CD8-positive, alpha-beta T cell (primary cell): ENCODE measurements at regions of chr6 and their contacts with region 1.

Region 1: DNA sequence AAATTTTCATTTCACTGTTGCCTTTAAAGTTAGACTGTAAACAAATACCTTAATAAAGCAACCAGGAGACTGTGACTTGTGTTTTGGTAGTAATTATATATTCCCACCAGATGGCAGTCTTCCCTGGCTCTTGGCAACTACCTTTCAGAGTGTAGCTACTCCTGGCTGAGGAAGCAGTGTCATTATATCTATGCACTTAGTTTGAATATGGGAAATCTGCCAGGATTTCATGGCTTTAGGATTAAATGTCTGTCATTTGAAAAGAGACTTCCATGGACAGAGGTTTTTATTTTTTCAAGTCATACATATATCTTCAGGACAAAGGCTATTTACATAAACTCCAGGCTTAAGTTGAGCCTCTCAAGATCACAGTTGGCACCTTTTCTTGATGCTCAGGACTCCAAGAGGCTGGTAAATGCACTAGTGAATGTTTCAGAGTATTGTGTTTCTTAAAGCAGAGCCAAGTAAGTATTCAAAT is 160.1 kb downstream of the C6orf58 start:
- DNase-seq: peak in 7 of 9 experiments; percentile 4 to 84 (median 41)
- ATAC-seq: peak; percentile 96
- H3K4me3 ChIP-seq: no peak overlapping the region
- H3K4me3 Mint-ChIP-seq: no peak overlapping the region
- H3K27ac ChIP-seq: peak overlapping the region in 1 of 2 experiments; percentile 21
- H3K27ac Mint-ChIP-seq: peak overlapping the region; percentile 69
- H3K4me1 ChIP-seq: peaks cover 31% of the 10 kb centered on the region
- H3K4me1 Mint-ChIP-seq: peaks cover 67% of the 10 kb centered on the region
- H3K27me3 ChIP-seq: no peaks in the 10 kb centered on the region
- H3K27me3 Mint-ChIP-seq: no peaks in the 10 kb centered on the region
- CTCF ChIP-seq: peak; percentile 84

Region 2: GRCh38 chr6:127841811-127842210 is 104.8 kb after region 1 on chr6:
- CTCF ChIA-PET with region 1: no interaction called
- POLR2A ChIA-PET with region 1: interaction called, 3 read pairs
- intact Hi-C with region 1: loop called in 1 of 2 experiments (anchors 5 kb)
- DNase-seq: no peak
- ATAC-seq: no peak
- H3K4me3 ChIP-seq: no peak overlapping the region
- H3K4me3 Mint-ChIP-seq: no peak overlapping the region
- H3K27ac ChIP-seq: no peak overlapping the region
- H3K27ac Mint-ChIP-seq: peak overlapping the region; percentile 37
- H3K4me1 ChIP-seq: peaks cover 19% of the 10 kb centered on the region
- H3K4me1 Mint-ChIP-seq: peaks cover 73% of the 10 kb centered on the region
- H3K27me3 ChIP-seq: no peaks in the 10 kb centered on the region
- H3K27me3 Mint-ChIP-seq: no peaks in the 10 kb centered on the region
- CTCF ChIP-seq: no peak

Region 3: GRCh38 chr6:128327890-128328289 is 590.8 kb after region 1 on chr6:
- CTCF ChIA-PET with region 1: interaction called, 9 read pairs
- POLR2A ChIA-PET with region 1: no interaction called
- intact Hi-C with region 1: loop called (anchors 1 kb)
- DNase-seq: peak in 4 of 9 experiments; percentile 7 to 63 (median 35)
- ATAC-seq: peak; percentile 44
- H3K4me3 ChIP-seq: no peak overlapping the region
- H3K4me3 Mint-ChIP-seq: no peak overlapping the region
- H3K27ac ChIP-seq: no peak overlapping the region
- H3K27ac Mint-ChIP-seq: no peak overlapping the region
- H3K4me1 ChIP-seq: no peaks in the 10 kb centered on the region
- H3K4me1 Mint-ChIP-seq: no peaks in the 10 kb centered on the region
- H3K27me3 ChIP-seq: no peaks in the 10 kb centered on the region
- H3K27me3 Mint-ChIP-seq: no peaks in the 10 kb centered on the region
- CTCF ChIP-seq: no peak

Region 4: GRCh38 chr6:128731249-128732165 is 994.5 kb after region 1 on chr6:
- CTCF ChIA-PET with region 1: interaction called, 3 read pairs
- POLR2A ChIA-PET with region 1: no interaction called
- intact Hi-C with region 1: loop called (anchors 1 to 5 kb)
- DNase-seq: peak in 2 of 9 experiments; percentile 33 to 49
- ATAC-seq: no peak
- H3K4me3 ChIP-seq: no peak overlapping the region
- H3K4me3 Mint-ChIP-seq: no peak overlapping the region
- H3K27ac ChIP-seq: no peak overlapping the region
- H3K27ac Mint-ChIP-seq: no peak overlapping the region
- H3K4me1 ChIP-seq: no peaks in the 10 kb centered on the region
- H3K4me1 Mint-ChIP-seq: no peaks in the 10 kb centered on the region
- H3K27me3 ChIP-seq: no peaks in the 10 kb centered on the region
- H3K27me3 Mint-ChIP-seq: peaks cover 11% of the 10 kb centered on the region
- CTCF ChIP-seq: peak; percentile 40